Aorta (tissue), 5 donors: ENCODE measurements at regions of chr5 and their contacts with region 1.

Region 1: DNA sequence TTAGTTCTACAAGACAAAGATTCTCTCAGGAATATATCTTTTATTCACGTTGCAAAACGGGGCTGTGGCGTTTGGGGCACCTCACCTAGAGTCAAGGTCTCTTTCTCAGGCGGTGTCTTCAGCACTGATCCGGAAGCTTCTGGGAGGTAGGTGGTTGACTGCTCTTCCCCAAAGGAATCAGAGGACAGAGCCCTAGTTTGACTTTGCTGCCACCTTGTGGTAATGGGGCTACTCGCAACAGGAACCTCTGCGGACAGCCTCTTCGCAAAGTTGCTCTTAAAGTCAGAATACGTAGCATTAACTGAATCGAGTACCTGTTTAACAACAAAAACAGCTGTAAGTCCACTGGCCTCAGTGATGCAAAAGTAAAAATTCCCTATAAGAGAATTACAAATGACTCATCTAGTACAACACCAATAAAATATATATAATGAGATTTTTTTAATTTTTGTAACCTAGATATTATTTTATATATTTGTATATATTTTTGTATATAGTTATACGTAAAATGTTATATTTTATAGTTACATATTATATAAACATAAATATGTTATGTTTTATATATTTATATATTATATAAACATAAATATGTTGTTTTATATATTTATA is 13.3 kb upstream of the GPX8 start:
- DNase-seq: peak; percentile 81 to 82
- ATAC-seq: peak; percentile 83
- H3K4me3 ChIP-seq: no peak overlapping the region
- H3K27ac ChIP-seq: no peak overlapping the region
- H3K4me1 ChIP-seq: no peaks in the 10 kb centered on the region
- H3K27me3 ChIP-seq: no peaks in the 10 kb centered on the region

Region 2: DNA sequence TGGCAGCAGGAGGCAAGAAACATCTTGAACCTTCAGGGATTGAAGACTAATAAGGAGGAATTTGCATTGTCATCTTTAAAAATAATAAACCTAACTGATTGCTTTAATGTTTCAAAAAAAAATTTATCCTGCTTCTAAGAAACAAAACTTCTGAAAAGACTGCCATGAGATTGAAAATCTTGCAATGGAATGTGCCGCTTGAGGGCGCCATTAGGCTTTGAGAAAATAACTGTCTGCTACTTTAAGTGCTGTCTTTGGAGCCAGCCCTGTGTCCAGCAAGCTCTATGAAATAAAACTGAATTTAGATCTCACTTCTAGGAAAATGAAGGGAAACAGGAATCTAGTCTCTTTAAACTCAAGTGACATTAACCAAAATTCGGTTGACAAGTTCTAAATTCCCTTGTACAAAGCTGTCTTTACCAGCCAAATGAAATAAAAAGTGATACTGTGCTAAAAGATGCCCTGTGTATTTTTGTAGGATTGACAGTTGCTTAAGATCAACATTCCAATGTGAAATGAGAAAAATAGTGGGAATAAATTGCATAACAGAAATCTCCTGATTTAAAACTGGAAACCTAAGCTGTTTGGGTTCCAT is 240.6 kb before region 1 on chr5:
- intact Hi-C with region 1: loop called (anchors 1 to 5 kb)
- DNase-seq: peak; percentile 79 to 89
- ATAC-seq: peak; percentile 80
- H3K4me3 ChIP-seq: no peak overlapping the region
- H3K27ac ChIP-seq: no peak overlapping the region
- H3K4me1 ChIP-seq: no peaks in the 10 kb centered on the region
- H3K27me3 ChIP-seq: no peaks in the 10 kb centered on the region

Region 3: DNA sequence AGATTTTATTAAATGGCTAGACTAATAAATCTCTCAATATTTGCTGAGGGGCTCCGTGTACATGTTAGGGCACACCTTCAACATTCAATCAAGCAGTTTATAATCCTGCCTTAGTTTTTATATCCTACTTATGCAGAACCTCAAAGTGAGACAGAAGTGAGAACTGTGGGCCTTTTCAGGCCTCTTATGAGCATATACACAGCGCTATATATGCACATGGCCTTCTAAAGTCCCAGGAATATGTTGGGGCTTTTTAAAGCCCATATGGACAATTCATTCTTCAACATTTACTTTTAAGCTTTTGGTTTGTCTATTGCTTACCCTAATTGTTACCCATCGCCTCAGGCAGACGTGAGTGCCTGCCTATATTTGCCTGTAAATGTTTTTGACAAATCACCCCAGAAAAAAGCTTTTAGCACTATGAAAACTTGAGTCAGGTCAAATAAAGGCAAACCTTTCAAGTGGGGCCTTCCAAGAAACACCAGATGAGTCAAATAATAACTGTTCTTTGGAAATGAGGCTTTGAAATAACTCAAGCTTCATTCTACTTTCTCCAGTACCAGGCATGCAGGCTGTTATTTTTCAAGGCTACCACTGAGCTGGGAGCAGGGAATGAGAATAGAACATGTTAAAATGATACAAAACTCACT is 219.4 kb before region 1 on chr5:
- intact Hi-C with region 1: no loop called
- DNase-seq: no peak
- ATAC-seq: no peak
- H3K4me3 ChIP-seq: no peak overlapping the region
- H3K27ac ChIP-seq: no peak overlapping the region
- H3K4me1 ChIP-seq: no peaks in the 10 kb centered on the region
- H3K27me3 ChIP-seq: no peaks in the 10 kb centered on the region

Region 4: DNA sequence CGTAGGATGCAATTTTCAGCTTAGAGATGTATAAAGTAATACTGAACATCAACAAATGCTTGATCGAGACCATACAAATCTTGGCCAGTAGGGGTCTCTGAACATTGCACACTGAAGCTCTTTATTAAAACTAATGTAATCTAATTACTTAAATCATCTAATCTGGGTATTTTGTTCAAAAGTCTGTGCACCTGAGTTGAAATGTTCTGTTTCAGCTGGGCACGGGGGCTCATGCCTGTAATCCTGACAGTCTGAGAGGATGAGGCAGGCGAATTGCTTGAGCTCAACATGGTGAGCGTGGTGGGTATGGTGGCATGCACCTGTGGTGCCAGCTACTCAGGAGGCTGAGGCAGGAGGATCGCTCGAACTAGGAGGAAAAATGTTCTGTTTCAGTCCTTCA is 202.3 kb before region 1 on chr5:
- intact Hi-C with region 1: loop called (anchors 5 to 10 kb)
- DNase-seq: no peak
- ATAC-seq: peak; percentile 56
- H3K4me3 ChIP-seq: no peak overlapping the region
- H3K27ac ChIP-seq: no peak overlapping the region
- H3K4me1 ChIP-seq: no peaks in the 10 kb centered on the region
- H3K27me3 ChIP-seq: no peaks in the 10 kb centered on the region

Region 5: GRCh38 chr5:55052383-55052931 is 94.2 kb before region 1 on chr5:
- intact Hi-C with region 1: no loop called
- DNase-seq: no peak
- ATAC-seq: no peak
- H3K4me3 ChIP-seq: no peak overlapping the region
- H3K27ac ChIP-seq: no peak overlapping the region
- H3K4me1 ChIP-seq: no peaks in the 10 kb centered on the region
- H3K27me3 ChIP-seq: no peaks in the 10 kb centered on the region